ENCODE measurements at regions of chr1 and their contacts with region 1.

Region 1: DNA sequence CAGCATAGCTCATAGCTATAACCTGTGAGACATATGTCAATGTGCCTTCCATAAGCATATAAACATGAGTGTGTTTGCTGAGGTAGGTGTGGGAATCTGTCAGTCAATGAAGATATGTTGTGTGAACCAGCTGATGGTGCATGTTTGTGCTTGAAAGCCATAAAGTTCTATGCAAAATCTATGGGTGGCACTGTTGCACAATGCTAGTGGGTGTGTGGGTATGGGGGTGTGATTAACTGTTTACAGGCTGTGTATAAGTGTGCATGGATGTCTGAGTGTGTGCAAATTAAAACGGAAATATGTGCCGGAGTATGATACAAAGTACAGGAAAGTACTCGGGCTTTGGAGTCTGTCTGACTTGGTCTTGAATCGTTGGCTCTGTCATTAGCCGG is 1.0 kb upstream of the ATP2B4 start:
- DNase-seq: no peak
- H3K4me3 ChIP-seq: peak overlapping the region; percentile 72 to 81
- H3K27ac ChIP-seq: peak overlapping the region in 1 of 2 donors; percentile 87
- H3K4me1 ChIP-seq: peaks cover 4 to 15% of the 10 kb centered on the region in 2 donors
- H3K27me3 ChIP-seq: no peaks in the 10 kb centered on the region
- CTCF ChIP-seq: peak in 2 of 3 experiments; percentile 14 to 37

Region 2: DNA sequence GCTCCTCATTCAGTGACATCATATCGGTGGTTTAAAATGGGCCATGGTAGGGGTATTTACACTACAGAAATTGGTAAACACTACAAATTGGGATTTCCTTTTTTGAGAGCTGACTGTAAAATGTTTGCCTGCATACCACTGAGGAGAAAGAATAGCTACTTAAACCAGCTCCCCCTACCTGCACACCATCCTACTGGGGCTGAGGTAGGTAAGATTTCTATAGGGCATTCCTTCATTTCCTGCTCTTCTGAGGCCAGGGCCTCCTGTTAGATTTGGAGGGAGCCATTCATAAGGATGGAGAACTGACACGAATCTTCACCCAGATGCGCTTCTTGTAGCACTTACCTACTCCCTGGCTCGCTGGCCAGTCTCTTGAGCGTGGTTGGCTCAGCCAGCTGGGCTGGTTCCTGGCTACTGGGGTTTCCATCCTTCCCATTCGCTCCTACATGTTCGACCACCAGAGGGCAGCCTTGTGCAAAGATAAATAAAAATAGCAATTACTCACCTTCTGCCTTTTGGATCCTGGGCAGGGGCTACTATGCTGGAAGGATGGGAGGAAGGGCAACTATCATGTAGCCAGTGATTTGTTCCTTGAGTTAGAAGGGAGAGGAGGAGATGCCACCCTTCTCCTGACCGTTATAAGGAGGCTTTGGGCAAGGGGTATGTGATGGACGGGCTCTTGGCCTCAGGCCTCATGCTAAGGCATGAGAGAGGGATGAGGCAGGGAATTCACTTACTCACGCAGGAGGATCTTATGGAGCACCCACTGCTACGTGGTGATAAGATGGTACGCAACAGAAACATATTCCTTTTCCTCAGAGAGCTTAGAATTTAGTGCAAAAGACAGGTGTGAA is 121.0 kb before region 1 on chr1:
- intact Hi-C with region 1: loop called (anchors 2 kb)
- DNase-seq: peak in 1 of 2 donors; percentile 92
- H3K4me3 ChIP-seq: no peak overlapping the region
- H3K27ac ChIP-seq: no peak overlapping the region
- H3K4me1 ChIP-seq: peaks cover 0 to 13% of the 10 kb centered on the region in 2 donors
- H3K27me3 ChIP-seq: no peaks in the 10 kb centered on the region
- CTCF ChIP-seq: peak; percentile 75 to 87 (median 84)

Region 3: GRCh38 chr1:203643213-203644045 is 17.8 kb after region 1 on chr1:
- intact Hi-C with region 1: loop called (anchors 1 kb)
- DNase-seq: no peak
- H3K4me3 ChIP-seq: no peak overlapping the region
- H3K27ac ChIP-seq: peak overlapping the region; percentile 84 to 86
- H3K4me1 ChIP-seq: peaks cover 8 to 40% of the 10 kb centered on the region in 2 donors
- H3K27me3 ChIP-seq: no peaks in the 10 kb centered on the region
- CTCF ChIP-seq: no peak

Region 4: DNA sequence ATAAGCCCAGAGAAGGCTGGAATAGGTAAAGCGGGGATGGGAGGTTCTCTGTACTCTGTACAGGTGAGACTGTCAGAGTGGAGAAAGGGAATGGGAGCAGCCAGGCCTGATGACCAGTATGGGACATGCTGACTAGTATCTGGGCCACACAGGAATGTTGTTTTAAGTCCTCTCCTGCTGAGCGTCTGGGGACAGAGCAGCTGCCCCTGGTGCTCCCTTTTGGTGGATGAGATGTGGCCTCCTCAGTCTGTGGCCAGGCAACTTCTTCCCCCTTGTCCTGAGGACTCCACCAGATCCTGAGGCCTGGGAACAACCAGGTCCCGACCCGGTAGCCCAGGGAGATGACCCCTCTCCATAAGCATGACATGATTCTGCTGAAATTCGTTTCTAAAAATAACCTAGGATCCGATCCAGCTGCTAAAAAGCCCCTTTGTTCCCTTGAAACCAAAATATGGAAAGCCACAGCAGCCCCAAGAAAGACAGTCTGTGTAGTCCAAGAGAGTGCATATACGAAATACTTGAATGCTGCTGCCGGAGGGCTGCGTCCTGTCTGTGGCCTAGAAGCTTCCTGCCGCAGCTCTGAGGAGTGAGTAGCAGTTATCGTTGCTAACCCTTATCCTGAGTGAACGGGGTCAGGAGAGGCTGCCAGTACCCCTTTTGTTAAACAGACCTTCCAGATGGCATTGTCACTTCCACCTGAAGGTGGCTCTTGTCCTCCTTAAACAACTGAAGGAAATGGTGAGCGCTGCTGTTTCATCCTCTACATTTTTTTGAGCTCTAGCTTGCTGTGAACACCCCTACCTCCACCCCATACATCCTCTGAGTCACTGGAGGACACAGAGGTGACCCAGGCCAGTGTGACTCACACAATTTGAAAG is 48.2 kb after region 1 on chr1:
- intact Hi-C with region 1: loop called (anchors 2 kb)
- DNase-seq: peak; percentile 49 to 89
- H3K4me3 ChIP-seq: no peak overlapping the region
- H3K27ac ChIP-seq: peak overlapping the region; percentile 82 to 93
- H3K4me1 ChIP-seq: peaks cover 15 to 56% of the 10 kb centered on the region in 2 donors
- H3K27me3 ChIP-seq: no peaks in the 10 kb centered on the region
- CTCF ChIP-seq: peak in 1 of 3 experiments; percentile 7

Region 5: DNA sequence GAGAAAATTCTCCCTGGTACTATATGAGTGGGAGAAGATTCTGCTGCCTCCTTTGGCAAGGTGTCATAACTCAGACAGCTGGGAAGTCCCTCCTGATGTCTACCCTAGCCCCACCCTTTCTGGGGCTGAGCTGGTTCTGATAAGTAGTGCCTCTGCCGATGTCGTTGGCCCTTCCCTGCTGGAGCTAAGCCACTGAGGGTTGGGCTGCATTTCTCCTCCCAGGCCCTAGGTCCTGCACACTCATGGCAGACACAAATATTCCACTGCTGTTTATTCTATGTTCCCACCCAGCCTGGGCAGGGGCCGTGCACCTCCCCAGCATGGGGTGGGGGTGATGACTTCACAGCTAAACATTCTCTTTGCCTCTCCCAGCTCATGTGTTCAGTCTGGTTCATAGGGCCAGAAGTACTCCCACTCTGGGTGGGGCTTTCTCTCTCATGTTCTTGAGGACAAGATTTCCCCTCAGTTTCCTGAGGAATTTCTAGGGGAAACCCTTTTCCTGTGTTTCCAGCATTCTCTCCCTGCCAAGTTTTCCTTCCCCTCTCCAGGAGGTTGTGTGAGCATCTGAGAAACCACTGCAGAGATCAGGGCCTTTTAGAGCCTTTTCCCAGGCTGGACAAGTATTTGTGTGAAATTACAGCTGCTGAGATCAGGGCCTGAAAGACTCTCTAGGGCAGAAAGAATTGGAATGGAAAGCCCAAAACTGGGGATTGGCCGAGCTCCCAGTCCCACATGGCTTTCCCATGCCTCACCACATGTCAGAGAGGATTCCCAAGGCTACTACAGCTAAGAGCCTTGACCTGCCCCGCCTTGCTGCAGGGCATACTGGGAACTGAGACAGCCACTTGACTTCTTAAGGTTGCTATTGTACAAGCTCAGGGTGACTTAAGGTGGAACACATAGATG is 67.2 kb after region 1 on chr1:
- intact Hi-C with region 1: loop called (anchors 1 kb)
- DNase-seq: peak; percentile 76 to 96
- H3K4me3 ChIP-seq: no peak overlapping the region
- H3K27ac ChIP-seq: peak overlapping the region; percentile 82 to 87
- H3K4me1 ChIP-seq: peaks cover 17 to 38% of the 10 kb centered on the region in 2 donors
- H3K27me3 ChIP-seq: no peaks in the 10 kb centered on the region
- CTCF ChIP-seq: no peak

Region 6: DNA sequence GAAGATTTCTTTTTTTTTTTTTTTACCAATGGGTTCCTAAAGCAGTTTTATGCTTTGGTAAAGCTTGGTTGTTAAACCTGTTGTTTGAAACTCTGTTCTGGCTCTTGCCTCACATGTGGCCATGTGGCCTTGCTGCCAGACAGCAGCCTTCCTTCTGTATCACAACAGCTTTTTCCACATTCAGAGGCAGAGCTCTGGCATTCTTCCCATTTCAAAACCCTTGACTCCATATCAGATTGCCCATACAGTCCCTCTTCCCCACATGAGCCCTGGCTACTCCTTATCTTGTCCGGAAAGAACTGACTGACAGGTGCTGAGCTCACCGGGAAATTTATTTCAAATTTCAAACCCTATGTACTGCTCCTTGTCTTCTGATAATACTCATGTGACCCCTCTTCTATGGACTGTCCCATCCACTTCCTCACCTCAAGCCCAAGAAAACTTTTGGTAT is 100.8 kb after region 1 on chr1:
- intact Hi-C with region 1: no loop called
- DNase-seq: no peak
- H3K4me3 ChIP-seq: no peak overlapping the region
- H3K27ac ChIP-seq: no peak overlapping the region
- H3K4me1 ChIP-seq: no peaks in the 10 kb centered on the region
- H3K27me3 ChIP-seq: no peaks in the 10 kb centered on the region
- CTCF ChIP-seq: no peak

Region 7: DNA sequence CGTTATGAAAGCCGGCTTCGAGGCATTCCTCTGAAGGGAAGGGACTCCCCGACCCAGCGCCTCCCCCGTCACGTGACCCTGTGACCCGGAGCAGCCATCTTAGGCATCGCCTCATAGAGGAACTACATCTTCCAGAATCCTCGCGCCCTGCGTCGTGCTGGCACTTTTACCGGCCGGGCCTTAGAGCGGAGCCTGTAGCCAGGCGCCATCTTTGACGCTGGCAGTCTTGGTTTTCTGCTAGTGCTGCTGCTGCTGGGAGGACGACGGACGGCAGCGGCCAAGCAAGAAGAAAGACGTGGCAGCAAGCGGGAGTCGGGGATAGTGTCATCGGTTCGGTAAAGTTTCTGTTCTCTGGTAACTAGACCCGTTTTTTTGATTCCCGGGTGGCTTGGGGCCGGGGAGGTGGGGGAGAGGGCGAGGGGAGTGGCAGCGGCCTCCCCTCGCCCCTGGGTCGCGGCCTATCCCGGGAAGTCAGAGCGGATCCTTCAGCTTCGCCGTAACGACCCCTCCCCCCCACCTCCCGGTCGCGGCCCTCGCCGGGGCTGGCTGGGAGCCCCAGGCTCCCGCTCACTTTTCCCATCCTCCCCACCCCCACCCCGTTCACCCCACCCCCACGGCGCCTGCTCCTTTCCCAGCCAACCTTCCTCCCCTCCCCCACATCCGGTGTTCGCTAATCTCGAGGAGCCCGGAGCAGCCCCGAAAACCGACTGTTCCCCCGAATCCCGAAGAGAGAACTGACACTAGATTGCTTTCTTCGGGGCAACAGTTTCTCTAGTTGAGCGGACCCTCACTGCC is 170.0 kb after region 1 on chr1 and contains the starts of genes ZBED6 and ZC3H11A:
- intact Hi-C with region 1: loop called (anchors 5 kb)
- DNase-seq: peak; percentile 97 to 100
- H3K4me3 ChIP-seq: peak within 1 kb of the TSS; percentile 82 to 92
- H3K27ac ChIP-seq: peak within 1 kb of the TSS; percentile 96 to 98
- H3K4me1 ChIP-seq: peaks cover 9 to 38% of the 10 kb centered on the region in 2 donors
- H3K27me3 ChIP-seq: no peaks in the 10 kb centered on the region
- CTCF ChIP-seq: no peak
- total RNA-seq, gene ZBED6: 1.5 TPM
- total RNA-seq, gene ZC3H11A: 44.4 TPM

Measured in ascending aorta (tissue), 2 donors.